HCT116 (cell line): ENCODE measurements at regions of chr9 and their contacts with region 1.

Region 1: GRCh38 chr9:72271613-72272478 is 93.2 kb downstream of the ZFAND5 start:
- DNase-seq: peak; percentile 47
- ATAC-seq: peak; percentile 90
- H3K4me3 ChIP-seq: no peak overlapping the region
- H3K27ac ChIP-seq: no peak overlapping the region
- H3K4me1 ChIP-seq: no peaks in the 10 kb centered on the region
- H3K27me3 ChIP-seq: no peaks in the 10 kb centered on the region
- CTCF ChIP-seq: peak; percentile 75 to 90 (median 85)
- POLR2A ChIP-seq: no peak
- RAD21 ChIP-seq: peak; percentile 91

Region 2: GRCh38 chr9:71806901-71807307 is 464.9 kb before region 1 on chr9:
- CTCF ChIA-PET with region 1: no interaction called
- POLR2A ChIA-PET with region 1: no interaction called
- RAD21 ChIA-PET with region 1: no interaction called
- intact Hi-C with region 1: loop called (anchors 2 kb)
- DNase-seq: peak; percentile 73
- ATAC-seq: peak; percentile 99
- H3K4me3 ChIP-seq: no peak overlapping the region
- H3K27ac ChIP-seq: no peak overlapping the region
- H3K4me1 ChIP-seq: no peaks in the 10 kb centered on the region
- H3K27me3 ChIP-seq: no peaks in the 10 kb centered on the region
- CTCF ChIP-seq: peak; percentile 89 to 99 (median 93)
- POLR2A ChIP-seq: no peak
- RAD21 ChIP-seq: peak; percentile 96

Region 3: DNA sequence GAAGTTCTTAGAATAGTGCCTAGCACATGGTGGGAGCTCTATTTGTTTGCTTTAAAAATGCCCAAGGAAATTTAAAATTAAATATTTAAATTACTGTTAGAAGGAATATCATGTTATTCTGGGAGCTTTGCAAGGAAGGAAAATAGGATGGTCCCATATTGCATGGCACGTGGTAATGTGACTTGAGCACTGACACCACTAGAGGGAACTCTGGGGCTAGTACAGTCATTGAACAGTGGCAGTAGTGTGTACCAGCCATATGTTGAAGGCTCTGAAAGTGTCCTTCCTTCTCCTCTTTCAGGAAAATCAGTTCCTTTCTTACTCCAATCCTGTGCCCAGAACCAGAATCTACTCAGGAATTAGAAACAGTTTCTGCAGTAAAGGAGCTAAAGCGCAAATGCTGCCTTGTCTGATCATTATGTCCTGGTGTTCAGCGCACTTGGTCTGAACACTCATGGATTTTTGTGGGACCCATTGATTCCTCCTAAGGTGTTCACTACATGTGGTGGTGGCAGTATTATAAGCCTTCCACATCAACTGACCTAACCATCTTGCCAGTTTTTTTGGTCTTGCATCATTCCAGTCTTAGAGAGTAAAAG is 68.5 kb before region 1 on chr9:
- CTCF ChIA-PET with region 1: no interaction called
- POLR2A ChIA-PET with region 1: no interaction called
- RAD21 ChIA-PET with region 1: no interaction called
- intact Hi-C with region 1: loop called (anchors 5 kb)
- DNase-seq: peak; percentile 28
- ATAC-seq: peak; percentile 98
- H3K4me3 ChIP-seq: no peak overlapping the region
- H3K27ac ChIP-seq: no peak overlapping the region
- H3K4me1 ChIP-seq: no peaks in the 10 kb centered on the region
- H3K27me3 ChIP-seq: no peaks in the 10 kb centered on the region
- CTCF ChIP-seq: peak; percentile 42 to 69 (median 63); a peak in 5 of 6 replicates
- POLR2A ChIP-seq: no peak
- RAD21 ChIP-seq: peak; percentile 56

Region 4: DNA sequence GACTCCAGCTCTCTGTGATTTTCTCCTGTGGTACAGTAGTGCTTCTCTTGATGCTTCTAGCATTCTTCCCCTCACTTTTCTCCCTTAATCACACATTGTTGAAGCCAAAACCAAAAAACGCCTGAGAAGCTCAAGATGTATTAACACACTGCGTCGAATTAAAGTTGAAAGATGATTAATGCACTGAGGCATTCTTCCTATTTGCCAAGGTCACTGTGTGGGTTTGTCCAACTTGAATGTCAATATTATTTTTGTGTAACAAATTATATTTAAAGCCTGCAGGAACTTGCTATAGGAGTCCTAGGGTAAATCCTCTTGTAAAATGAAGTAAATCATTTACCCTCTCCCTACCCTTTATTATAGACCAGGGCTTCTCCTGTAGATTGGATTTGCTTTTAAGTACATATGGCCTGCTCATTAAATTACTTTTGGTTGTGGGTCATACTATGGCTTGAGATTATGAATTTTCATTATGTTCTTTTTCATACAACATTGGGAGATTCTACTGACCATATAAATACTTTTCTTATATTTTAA is 54.5 kb before region 1 on chr9:
- CTCF ChIA-PET with region 1: no interaction called
- POLR2A ChIA-PET with region 1: no interaction called
- RAD21 ChIA-PET with region 1: no interaction called
- intact Hi-C with region 1: loop called (anchors 5 kb)
- DNase-seq: no peak
- ATAC-seq: no peak
- H3K4me3 ChIP-seq: no peak overlapping the region
- H3K27ac ChIP-seq: no peak overlapping the region
- H3K4me1 ChIP-seq: no peaks in the 10 kb centered on the region
- H3K27me3 ChIP-seq: no peaks in the 10 kb centered on the region
- CTCF ChIP-seq: no peak
- POLR2A ChIP-seq: no peak
- RAD21 ChIP-seq: no peak

Region 5: DNA sequence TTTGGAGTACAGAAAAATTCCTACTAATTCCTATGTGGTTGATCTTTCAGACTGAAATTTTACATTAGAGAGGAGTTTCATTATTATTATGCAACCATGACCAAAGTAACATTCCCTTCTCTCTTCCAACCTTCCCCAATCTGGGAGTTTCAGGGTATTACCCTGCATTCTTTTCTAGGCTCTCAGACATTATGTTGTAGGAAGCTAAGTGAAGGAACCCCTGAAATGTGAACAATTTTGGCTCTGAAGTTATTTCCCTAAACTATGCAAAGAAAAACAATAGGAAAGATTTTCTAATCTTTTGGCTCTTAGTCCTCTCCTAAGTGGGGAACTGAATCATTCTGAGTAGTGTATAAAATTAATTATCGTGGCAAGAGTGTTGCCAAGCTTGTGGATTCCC is 156.5 kb after region 1 on chr9:
- CTCF ChIA-PET with region 1: no interaction called
- POLR2A ChIA-PET with region 1: no interaction called
- RAD21 ChIA-PET with region 1: no interaction called
- intact Hi-C with region 1: no loop called
- DNase-seq: no peak
- ATAC-seq: no peak
- H3K4me3 ChIP-seq: no peak overlapping the region
- H3K27ac ChIP-seq: no peak overlapping the region
- H3K4me1 ChIP-seq: peaks cover 1 to 6% of the 10 kb centered on the region in 2 experiments; a peak in 3 of 4 replicates
- H3K27me3 ChIP-seq: no peaks in the 10 kb centered on the region
- CTCF ChIP-seq: no peak
- POLR2A ChIP-seq: no peak
- RAD21 ChIP-seq: no peak